ENCODE measurements at regions of chr2 and their contacts with region 1.

Region 1: GRCh38 chr2:11688222-11689069 is 18.5 kb upstream of the NTSR2 start:
- DNase-seq: peak; percentile 79 to 92
- ATAC-seq: peak; percentile 70 to 74
- H3K4me3 ChIP-seq: peak overlapping the region; percentile 30 to 38 (median 36)
- H3K27ac ChIP-seq: peak overlapping the region; percentile 92 to 100 (median 93)
- H3K4me1 ChIP-seq: peaks cover 65 to 71% of the 10 kb centered on the region in 2 donors
- H3K27me3 ChIP-seq: no peaks in the 10 kb centered on the region
- CTCF ChIP-seq: peak; percentile 85 to 93 (median 86)
- POLR2A ChIP-seq: peak; percentile 25 to 38

Region 2: GRCh38 chr2:10844097-10844496 is 844.3 kb before region 1 on chr2:
- in situ Hi-C with region 1: no loop called
- intact Hi-C with region 1: loop called (anchors 10 kb)
- DNase-seq: peak; percentile 92 to 95
- ATAC-seq: peak; percentile 75 to 78
- H3K4me3 ChIP-seq: peak overlapping the region; percentile 2 to 46 (median 40)
- H3K27ac ChIP-seq: peak overlapping the region; percentile 86 to 94 (median 92)
- H3K4me1 ChIP-seq: peaks cover 46 to 54% of the 10 kb centered on the region in 2 donors
- H3K27me3 ChIP-seq: no peaks in the 10 kb centered on the region
- CTCF ChIP-seq: no peak
- POLR2A ChIP-seq: peak; percentile 50 to 59

Region 3: DNA sequence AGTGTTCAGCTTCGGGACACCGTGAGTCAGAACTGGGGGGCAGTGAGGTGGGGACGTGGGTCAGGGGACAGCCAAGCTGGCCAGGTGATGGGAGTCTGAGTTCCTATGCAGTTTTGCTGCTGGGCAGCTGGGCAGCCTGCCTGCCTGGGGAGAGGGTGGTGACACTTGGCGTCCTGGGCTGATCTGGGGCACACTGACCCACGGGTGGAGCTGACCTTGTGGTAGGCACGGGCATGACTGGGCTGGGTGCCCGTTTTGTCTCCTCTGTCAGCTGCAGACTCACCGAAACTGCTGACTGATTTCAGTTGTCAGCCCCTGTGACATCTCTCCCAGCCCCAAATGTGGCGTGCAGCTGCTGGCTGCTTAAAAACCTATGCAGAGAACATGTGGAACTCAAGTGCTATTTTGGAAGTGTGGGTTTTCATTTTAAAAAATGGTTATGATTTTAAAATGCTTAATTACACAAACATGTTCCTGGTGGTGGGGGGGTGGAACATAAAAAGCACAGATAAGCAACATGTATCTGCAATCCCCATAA is 189.8 kb before region 1 on chr2:
- in situ Hi-C with region 1: loop called in 2 of 4 experiments (anchors 10 to 25 kb)
- intact Hi-C with region 1: loop called (anchors 5 kb)
- DNase-seq: peak; percentile 95 to 98
- ATAC-seq: peak; percentile 95 to 97
- H3K4me3 ChIP-seq: no peak overlapping the region
- H3K27ac ChIP-seq: peak overlapping the region; percentile 66 to 84 (median 78)
- H3K4me1 ChIP-seq: peaks cover 13 to 21% of the 10 kb centered on the region in 2 donors
- H3K27me3 ChIP-seq: no peaks in the 10 kb centered on the region
- CTCF ChIP-seq: no peak
- POLR2A ChIP-seq: peak; percentile 26 to 41

Region 4: DNA sequence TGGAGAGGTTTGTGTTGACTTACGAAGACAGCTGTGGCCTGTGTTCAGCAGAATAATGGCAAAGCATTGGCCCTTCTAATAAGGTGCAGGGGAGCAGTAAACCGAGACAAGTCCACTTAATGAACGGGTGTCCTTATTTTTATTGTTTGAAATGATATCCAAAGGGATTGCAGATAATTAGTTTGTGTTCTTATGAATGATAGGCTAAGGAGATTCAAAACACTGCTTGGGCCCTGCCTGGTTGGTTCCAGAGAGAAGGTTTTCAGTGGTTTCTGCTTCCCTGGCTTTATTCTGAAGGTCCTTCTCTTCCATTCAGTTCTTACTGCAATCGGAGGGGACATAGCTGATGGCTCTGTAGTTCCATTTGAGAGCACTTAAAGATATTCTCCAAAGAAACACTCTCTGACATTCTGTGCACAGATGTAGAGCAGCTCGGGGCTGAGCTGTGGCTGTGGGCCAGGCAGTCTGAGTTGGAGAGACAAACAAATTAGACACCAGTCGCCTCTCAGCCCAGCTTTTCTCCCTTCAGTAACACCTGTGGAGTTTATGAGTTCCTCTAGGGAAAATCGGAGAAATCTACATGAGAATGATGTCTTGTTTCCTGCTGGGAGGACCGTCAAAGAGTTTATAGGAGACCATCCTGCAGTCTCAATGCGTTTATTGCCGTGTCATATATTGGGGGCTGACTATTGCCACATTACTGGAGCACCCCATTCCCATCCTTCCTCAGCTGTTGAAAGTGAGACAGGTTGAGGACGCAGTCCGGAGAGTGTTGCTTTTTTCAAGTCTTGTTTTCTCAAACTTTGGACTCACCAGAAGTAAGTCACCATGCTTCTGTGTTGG is 148.1 kb before region 1 on chr2:
- in situ Hi-C with region 1: no loop called
- intact Hi-C with region 1: no loop called
- DNase-seq: no peak
- ATAC-seq: peak; percentile 6 to 19
- H3K4me3 ChIP-seq: peak overlapping the region in 1 of 4 donors; percentile 31
- H3K27ac ChIP-seq: peak overlapping the region; percentile 36 to 81 (median 45)
- H3K4me1 ChIP-seq: peaks cover 14 to 24% of the 10 kb centered on the region in 2 donors
- H3K27me3 ChIP-seq: no peaks in the 10 kb centered on the region
- CTCF ChIP-seq: no peak
- POLR2A ChIP-seq: no peak

Region 5: GRCh38 chr2:11743846-11744553 is 55.6 kb after region 1 on chr2:
- in situ Hi-C with region 1: loop called in 3 of 4 experiments (anchors 5 to 10 kb)
- intact Hi-C with region 1: loop called (anchors 1 kb)
- DNase-seq: peak; percentile 97 to 98
- ATAC-seq: peak; percentile 80 to 82
- H3K4me3 ChIP-seq: peak overlapping the region; percentile 41 to 48 (median 46)
- H3K27ac ChIP-seq: peak overlapping the region; percentile 92 to 95 (median 94)
- H3K4me1 ChIP-seq: peaks cover 33 to 55% of the 10 kb centered on the region in 2 donors
- H3K27me3 ChIP-seq: no peaks in the 10 kb centered on the region
- CTCF ChIP-seq: no peak
- POLR2A ChIP-seq: peak; percentile 55 to 62

Region 6: GRCh38 chr2:11778923-11779757 is 90.7 kb after region 1 on chr2:
- in situ Hi-C with region 1: loop called in 3 of 4 experiments (anchors 5 to 10 kb)
- intact Hi-C with region 1: loop called (anchors 1 kb)
- DNase-seq: peak; percentile 59 to 76
- ATAC-seq: peak; percentile 72 to 87
- H3K4me3 ChIP-seq: no peak overlapping the region
- H3K27ac ChIP-seq: peak overlapping the region; percentile 58 to 70 (median 66)
- H3K4me1 ChIP-seq: peaks cover 40 to 51% of the 10 kb centered on the region in 2 donors
- H3K27me3 ChIP-seq: no peaks in the 10 kb centered on the region
- CTCF ChIP-seq: peak; percentile 97 to 99 (median 98)
- POLR2A ChIP-seq: no peak